ENCODE measurements at regions of chr14 and their contacts with region 1.

Region 1: DNA sequence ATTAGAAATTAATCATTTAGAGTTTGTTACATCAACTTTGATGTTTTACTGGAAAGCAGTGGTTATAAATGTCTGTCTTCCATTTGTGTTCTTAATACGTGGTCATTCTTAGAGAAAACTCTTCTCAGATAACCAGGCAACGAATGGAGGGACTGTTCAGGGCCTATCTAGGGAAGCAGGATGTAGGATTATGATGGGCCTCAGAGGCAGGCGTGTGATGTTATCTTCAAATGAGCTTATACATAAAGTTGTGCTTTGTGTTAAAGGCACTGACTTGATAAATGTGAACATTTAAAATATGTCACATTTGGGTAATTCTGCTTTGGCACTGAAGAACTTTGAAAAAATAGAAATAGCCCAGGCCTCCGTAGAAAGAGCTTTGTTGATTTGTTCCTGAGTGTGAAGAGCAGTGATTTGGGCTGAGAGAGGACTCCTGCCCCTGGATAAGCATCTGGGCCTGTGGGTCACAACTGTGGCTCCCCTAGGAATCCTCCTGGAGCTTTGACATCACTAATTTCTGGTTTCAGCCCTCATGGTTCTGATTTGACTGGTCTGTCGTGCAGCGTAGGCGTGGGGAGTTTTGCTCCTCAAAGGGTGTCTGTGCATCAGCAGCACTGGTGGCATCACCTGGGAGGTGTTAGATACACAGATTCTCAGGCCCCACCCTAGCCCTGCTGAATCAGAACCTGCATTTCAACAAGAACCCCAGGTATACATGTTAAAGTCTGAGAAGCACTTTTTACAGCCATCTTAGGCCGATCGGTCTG is 55.4 kb downstream of the SAMD4A start:
- DNase-seq: no peak
- ATAC-seq: no peak
- H3K4me3 ChIP-seq: no peak overlapping the region
- H3K27ac ChIP-seq: no peak overlapping the region
- H3K4me1 ChIP-seq: peaks cover 6 to 14% of the 10 kb centered on the region in 2 donors
- H3K27me3 ChIP-seq: no peaks in the 10 kb centered on the region

Region 2: GRCh38 chr14:54579621-54580020 is 42.8 kb before region 1 on chr14:
- intact Hi-C with region 1: loop called in 1 of 2 experiments (anchors 5 kb)
- DNase-seq: no peak
- ATAC-seq: no peak
- H3K4me3 ChIP-seq: no peak overlapping the region
- H3K27ac ChIP-seq: no peak overlapping the region
- H3K4me1 ChIP-seq: peaks cover 9 to 14% of the 10 kb centered on the region in 2 donors
- H3K27me3 ChIP-seq: no peaks in the 10 kb centered on the region

Region 3: GRCh38 chr14:54742492-54743350 is 120.3 kb after region 1 on chr14:
- intact Hi-C with region 1: no loop called
- DNase-seq: no peak
- ATAC-seq: no peak
- H3K4me3 ChIP-seq: no peak overlapping the region
- H3K27ac ChIP-seq: no peak overlapping the region
- H3K4me1 ChIP-seq: peaks cover 6 to 7% of the 10 kb centered on the region in 2 donors
- H3K27me3 ChIP-seq: no peaks in the 10 kb centered on the region

Measured in aorta (tissue), 5 donors.